HEK293 (cell line): ENCODE measurements at regions of chr10 and their contacts with region 1.

Region 1: DNA sequence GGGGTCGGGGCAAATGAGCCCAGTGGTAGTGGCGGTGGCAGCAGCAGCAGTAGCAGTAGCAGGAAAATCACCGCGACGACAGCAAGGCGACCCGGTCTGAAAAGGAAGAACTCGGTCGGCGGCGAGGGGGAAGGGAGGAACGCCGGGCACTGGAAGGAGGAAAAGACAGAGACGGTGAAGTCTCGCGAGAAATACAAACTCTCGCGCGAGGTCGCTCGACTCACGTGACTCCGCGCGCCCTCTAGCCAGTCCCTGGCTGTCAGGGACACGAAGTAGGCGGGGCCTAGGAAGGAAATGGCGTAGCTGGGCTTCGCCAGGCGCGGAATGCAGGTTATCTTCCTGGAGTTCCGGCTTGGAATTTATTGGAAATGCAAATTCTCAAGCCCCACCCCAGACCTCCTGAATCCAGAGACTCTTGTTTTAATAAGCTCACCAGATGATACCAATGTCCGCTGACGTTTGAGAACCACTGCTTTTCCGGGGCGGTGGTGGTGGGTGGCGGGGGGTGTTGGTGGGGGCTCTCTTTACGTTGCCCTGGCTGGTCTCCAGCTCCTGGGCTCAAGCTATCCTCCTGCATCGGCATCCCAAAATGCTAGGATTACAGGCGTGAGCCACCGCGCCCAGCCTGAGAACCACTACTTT is at the start of gene SMNDC1:
- H3K4me3 ChIP-seq: peak within 1 kb of the TSS; percentile 54
- H3K27ac ChIP-seq: peak within 1 kb of the TSS; percentile 90
- H3K4me1 ChIP-seq: peaks cover 9% of the 10 kb centered on the region
- CTCF ChIP-seq: no peak

Region 2: DNA sequence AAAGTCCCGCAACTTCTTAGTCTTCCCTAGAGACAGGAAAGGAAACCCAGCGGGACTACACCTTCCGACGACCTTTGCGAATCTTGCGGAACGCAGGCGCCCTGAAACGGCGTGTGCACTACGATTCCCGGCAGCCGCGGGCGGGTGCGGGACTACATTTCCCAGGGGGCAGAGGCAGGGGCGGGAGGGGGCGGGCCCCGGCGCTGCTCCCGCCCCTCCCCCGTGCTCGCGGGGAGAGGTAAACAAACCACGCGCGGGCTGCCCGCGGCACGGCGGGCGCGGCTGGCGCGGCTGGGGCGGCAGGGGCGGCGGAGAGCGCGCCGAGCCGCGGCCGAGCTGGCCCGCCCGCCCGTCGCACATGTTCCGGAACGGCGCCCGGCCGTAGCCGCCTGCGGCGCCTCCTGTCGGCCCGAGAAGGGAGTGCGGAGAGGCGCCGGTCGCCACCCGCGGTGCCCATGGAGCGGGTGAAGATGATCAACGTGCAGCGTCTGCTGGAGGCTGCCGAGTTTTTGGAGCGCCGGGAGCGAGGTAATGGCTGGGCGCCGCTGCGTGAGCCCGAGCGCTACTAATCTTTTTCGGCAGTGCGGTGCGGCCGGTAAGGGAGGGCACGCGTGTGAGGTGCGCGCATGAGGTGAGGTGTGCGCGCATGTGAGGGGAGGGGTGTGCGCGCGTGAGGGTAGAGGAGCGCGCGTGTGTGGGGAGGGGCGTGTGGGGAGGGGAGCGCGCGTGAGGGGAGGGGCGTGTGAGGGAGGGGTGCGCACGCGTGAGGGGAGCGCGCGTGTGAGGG is 79.0 kb before region 1 on chr10:
- CTCF ChIA-PET with region 1: no interaction called
- POLR2A ChIA-PET with region 1: no interaction called
- H3K4me3 ChIP-seq: peak overlapping the region; percentile 85
- H3K27ac ChIP-seq: peak overlapping the region; percentile 90
- H3K4me1 ChIP-seq: peaks cover 7% of the 10 kb centered on the region
- CTCF ChIP-seq: peak; percentile 76

Region 3: GRCh38 chr10:110556969-110557601 is 252.2 kb after region 1 on chr10:
- CTCF ChIA-PET with region 1: interaction called, 13 read pairs
- POLR2A ChIA-PET with region 1: interaction called, 6 read pairs
- H3K4me3 ChIP-seq: no peak overlapping the region
- H3K27ac ChIP-seq: no peak overlapping the region
- H3K4me1 ChIP-seq: no peaks in the 10 kb centered on the region
- CTCF ChIP-seq: peak; percentile 52; the same call in 1 of the 2 replicates

Region 4: DNA sequence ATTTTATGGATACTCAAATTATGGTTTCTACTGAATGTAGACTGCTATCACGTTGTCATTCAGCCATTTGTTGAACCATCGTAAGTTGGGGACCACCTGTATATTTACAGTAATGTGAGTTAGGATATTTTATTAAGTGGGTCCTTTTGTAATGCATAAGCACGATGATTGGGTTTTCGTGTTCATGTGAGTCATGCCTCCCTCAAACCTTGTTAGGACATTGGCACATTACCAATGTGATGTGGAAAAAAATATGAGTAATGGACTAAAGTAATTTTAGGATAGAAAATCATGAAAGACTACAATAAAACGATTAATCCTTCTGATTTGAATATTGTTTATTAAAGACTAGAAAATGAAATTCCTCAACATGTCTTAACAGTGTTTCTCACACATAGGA is 271.3 kb after region 1 on chr10:
- CTCF ChIA-PET with region 1: interaction called, 10 read pairs
- POLR2A ChIA-PET with region 1: no interaction called
- H3K4me3 ChIP-seq: no peak overlapping the region
- H3K27ac ChIP-seq: no peak overlapping the region
- H3K4me1 ChIP-seq: peaks cover under 1% of the 10 kb centered on the region; the same call in 1 of the 2 replicates
- CTCF ChIP-seq: no peak